Heart left ventricle (tissue), 16 donors: ENCODE measurements at regions of chr2 and their contacts with region 1.

Region 1: DNA sequence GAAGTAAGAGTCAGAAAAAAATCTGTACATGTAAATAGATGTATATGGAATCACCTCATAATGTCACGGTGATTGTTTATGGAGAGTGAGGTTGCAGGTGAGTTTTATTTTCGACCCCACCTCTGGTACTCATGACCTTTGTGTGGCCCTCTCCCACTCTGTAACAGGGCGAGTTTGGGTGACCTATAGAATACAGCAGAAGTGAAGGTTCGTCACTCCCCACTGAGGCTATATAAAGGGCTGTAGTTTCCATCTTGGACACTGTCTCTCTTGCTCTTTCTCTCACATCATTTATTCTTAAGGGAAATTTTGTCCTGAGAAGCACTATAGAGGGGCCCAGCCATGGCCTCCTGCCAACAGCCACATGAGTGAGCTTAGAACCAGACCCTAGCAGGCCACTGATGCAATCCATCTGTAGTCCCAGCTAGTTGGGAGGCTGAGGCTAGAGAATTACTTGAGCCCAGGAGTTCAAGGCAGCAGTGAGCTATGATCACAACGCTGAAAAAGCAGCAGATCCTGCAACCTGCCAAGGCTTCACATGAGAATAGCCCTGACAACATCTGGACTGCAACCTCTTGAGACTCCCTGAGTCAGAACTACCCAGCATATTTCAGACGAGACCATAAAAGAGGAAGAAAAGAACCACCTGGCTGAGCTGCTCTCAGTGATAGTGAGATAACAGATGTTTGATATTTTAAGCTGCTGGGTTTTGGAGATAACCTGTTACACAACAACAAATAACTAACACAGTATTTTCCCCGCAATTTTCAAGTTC is 74.3 kb upstream of the SLC1A4 start:
- DNase-seq: peak in 1 of 5 donors; percentile 41
- ATAC-seq: peak in 2 of 4 donors; percentile 14 to 56
- H3K4me3 ChIP-seq: no peak overlapping the region
- H3K27ac ChIP-seq: no peak overlapping the region
- H3K4me1 ChIP-seq: peaks cover 0 to 13% (median 4%) of the 10 kb centered on the region in 12 donors
- H3K27me3 ChIP-seq: no peaks in the 10 kb centered on the region
- CTCF ChIP-seq: no peak
- POLR2A ChIP-seq: no peak

Region 2: GRCh38 chr2:65031341-65032018 is 116.6 kb after region 1 on chr2:
- intact Hi-C with region 1: loop called in 1 of 10 experiments (anchors 2 kb)
- DNase-seq: no peak
- ATAC-seq: peak in 1 of 4 donors; percentile 15
- H3K4me3 ChIP-seq: no peak overlapping the region
- H3K27ac ChIP-seq: no peak overlapping the region
- H3K4me1 ChIP-seq: peaks cover 0 to 30% (median 8%) of the 10 kb centered on the region in 12 donors
- H3K27me3 ChIP-seq: no peaks in the 10 kb centered on the region
- CTCF ChIP-seq: no peak
- POLR2A ChIP-seq: no peak

Region 3: GRCh38 chr2:65045651-65046050 is 130.7 kb after region 1 on chr2:
- intact Hi-C with region 1: loop called (anchors 1 to 5 kb)
- DNase-seq: no peak
- ATAC-seq: no peak
- H3K4me3 ChIP-seq: no peak overlapping the region
- H3K27ac ChIP-seq: no peak overlapping the region
- H3K4me1 ChIP-seq: peaks cover 0 to 10% (median 1%) of the 10 kb centered on the region in 12 donors
- H3K27me3 ChIP-seq: no peaks in the 10 kb centered on the region
- CTCF ChIP-seq: no peak
- POLR2A ChIP-seq: no peak

Region 4: DNA sequence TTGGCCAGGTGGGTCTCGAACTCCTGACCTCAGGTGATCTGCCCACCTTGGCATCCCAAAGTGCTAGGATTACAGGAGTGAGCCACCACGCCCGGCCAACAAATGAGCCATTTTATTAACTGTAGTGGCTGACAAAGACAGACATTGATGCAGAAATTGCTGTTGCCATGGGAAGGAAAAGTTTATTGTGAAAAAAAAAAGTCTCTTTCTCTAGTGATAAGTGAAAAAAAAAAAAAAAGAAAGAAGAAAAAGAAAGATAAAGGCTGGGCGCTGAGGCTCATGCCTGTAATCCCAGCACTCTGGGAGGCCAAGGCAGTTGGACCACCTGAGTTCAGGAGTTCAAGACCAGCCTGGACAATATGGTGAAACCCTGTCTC is 254.8 kb after region 1 on chr2:
- intact Hi-C with region 1: loop called in 6 of 10 experiments (anchors 2 to 10 kb)
- DNase-seq: no peak
- ATAC-seq: no peak
- H3K4me3 ChIP-seq: no peak overlapping the region
- H3K27ac ChIP-seq: no peak overlapping the region
- H3K4me1 ChIP-seq: peaks cover 0 to 15% (median 3%) of the 10 kb centered on the region in 12 donors
- H3K27me3 ChIP-seq: no peaks in the 10 kb centered on the region
- CTCF ChIP-seq: no peak
- POLR2A ChIP-seq: no peak

Region 5: GRCh38 chr2:65186872-65187851 is 272.2 kb after region 1 on chr2:
- intact Hi-C with region 1: loop called in 7 of 10 experiments (anchors 5 to 10 kb)
- DNase-seq: peak; percentile 65 to 77 (median 74)
- ATAC-seq: peak; percentile 66 to 98 (median 94)
- H3K4me3 ChIP-seq: no peak overlapping the region
- H3K27ac ChIP-seq: no peak overlapping the region
- H3K4me1 ChIP-seq: peaks cover 0 to 7% (median 0%) of the 10 kb centered on the region in 12 donors
- H3K27me3 ChIP-seq: no peaks in the 10 kb centered on the region
- CTCF ChIP-seq: peak; percentile 73 to 94 (median 80)
- POLR2A ChIP-seq: no peak

Region 6: DNA sequence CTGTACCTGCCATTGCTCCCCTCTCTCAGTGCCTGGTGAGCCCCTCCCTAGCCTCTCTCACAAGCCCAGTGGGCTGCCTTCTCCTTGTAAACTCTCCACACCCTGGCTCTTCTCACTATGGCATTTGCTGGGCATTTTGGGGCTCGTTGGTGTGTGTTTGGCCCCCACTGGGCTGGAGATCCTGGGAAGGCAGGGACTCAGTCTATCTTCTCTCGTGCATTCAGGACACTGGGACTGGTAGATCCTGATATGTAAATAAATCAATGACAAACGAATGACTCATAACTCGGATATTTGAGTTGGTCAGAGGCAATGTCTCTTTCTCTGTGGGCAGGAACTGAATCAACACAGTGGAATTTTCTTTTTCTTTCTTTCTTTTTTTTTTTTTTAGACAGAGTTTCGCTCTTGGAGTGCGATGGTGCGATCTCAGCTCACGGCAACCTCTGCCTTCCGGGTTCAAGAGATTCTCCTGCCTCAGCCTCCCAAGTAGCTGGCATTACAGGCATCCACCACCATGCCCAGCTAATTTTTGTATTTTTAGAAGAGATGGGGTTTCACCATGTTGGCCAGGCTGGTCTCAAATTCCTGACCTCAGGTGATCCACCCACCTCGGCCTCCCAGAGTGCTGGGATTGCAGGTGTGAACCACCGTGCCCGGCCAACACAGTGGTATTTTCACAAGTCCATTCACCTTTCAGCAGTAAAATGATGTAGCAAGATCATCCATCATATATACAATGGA is 662.1 kb after region 1 on chr2:
- intact Hi-C with region 1: loop called in 6 of 10 experiments (anchors 5 to 10 kb)
- DNase-seq: no peak
- ATAC-seq: peak in 1 of 4 donors; percentile 54
- H3K4me3 ChIP-seq: no peak overlapping the region
- H3K27ac ChIP-seq: no peak overlapping the region
- H3K4me1 ChIP-seq: peaks cover 0 to 17% (median 4%) of the 10 kb centered on the region in 12 donors
- H3K27me3 ChIP-seq: no peaks in the 10 kb centered on the region
- CTCF ChIP-seq: no peak
- POLR2A ChIP-seq: no peak